ENCODE measurements at regions of chr7 and their contacts with region 1.

Region 1: DNA sequence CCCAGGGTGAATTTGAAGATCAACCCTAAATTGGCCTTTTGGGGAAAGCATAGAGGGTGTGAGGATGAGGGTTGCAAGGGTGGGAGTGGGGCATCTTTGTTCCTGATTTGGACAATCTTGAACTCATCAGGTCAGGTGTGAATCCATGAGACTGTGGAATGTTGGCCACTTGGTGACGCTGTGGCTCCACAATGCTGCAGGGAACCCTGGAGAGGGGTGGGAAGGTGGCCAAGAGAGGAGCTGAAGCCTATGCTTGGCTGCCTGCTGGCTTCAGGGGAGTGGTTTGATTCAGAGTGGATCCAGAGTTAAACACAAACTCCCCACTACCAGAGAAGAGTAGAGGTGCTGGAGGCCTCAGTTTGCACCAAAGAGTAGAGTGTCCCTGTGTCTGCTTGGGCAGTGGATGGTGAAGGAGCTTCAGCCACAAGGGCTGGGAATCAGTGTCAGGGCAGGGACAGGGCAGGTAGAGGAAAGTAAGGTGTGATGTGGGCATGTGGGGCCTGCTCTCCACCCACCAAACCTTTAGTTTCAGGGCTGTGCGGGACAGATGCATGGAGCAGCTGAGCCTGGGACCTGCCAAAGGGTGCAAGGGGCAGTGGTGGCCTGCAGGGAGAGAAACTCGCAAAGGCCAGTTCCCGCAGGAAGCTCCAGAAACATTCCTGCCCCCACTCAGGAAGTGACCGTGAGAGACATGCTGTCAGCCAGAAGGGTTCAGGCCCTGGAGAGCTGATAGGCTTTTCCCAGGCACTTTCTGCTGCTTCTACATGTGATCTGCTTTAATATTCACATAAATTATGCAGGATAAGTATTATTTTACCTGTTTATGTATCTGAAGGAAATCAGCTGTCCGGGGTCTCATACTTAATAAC is 81.0 kb upstream of the PRSS58 start:
- DNase-seq: peak in 1 of 2 donors; percentile 40
- ATAC-seq: peak; percentile 69 to 71
- H3K4me3 ChIP-seq: no peak overlapping the region
- H3K27ac ChIP-seq: no peak overlapping the region
- H3K4me1 ChIP-seq: peaks cover 4 to 12% of the 10 kb centered on the region in 2 donors
- H3K27me3 ChIP-seq: no peaks in the 10 kb centered on the region
- CTCF ChIP-seq: peak in 3 of 5 experiments; percentile 32 to 55 (median 38)
- POLR2A ChIP-seq: no peak

Region 2: DNA sequence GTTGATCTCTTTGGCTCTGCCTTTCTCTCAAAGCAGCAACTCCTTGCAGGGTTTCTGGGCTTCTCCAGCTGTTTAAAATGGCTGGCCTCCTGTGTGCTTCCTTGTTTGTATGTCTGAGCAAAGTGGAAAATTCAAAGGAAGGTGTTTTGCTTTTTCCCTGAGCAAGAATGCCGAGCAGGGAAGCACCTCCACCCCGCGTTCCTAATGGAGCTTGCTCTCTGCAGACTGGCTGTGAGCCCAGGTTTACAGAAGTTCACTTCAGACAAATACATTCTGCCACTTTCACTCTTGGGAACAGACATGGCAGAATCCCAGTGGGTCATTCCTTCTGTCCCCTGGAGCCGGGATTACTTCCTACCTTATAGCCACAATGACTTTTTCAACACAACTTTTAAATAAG is 969.4 kb before region 1 on chr7:
- in situ Hi-C with region 1: no loop called
- intact Hi-C with region 1: no loop called
- DNase-seq: peak in 1 of 2 donors; percentile 17
- ATAC-seq: peak; percentile 53 to 71
- H3K4me3 ChIP-seq: no peak overlapping the region
- H3K27ac ChIP-seq: peak overlapping the region in 2 of 4 donors; percentile 50 to 67
- H3K4me1 ChIP-seq: peaks cover 19 to 29% of the 10 kb centered on the region in 2 donors
- H3K27me3 ChIP-seq: no peaks in the 10 kb centered on the region
- CTCF ChIP-seq: no peak
- POLR2A ChIP-seq: no peak

Region 3: DNA sequence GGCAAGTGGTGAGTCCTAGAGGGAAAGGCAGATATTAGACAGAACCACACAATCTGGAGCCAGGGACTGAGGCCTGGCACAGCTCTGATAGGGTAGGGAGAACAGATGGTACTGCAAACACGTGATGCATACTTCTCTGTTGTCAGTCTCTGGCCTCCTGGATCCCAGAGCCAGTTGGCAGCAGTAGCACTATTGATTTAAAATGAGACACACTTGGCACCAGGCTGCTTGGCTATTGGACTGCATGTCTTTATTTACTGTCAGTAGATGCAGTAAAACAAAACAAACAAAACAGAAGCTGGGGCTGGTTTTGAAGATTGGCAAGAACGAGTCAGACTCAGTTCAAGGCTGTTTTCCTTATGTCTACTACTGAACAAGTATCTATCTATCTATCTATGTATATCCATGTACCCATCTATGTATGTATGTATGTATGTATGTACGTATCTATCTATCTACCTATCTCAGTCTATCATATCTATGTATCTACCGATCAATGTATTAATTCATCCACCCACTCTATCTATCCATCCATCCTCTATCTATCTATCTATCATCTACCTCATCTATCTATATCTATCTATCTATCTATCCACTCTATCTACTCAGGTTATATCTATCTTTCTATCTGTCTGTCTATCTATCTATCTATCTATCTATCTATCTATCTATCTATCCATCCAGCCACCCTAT is 250.7 kb before region 1 on chr7:
- in situ Hi-C with region 1: no loop called
- intact Hi-C with region 1: no loop called
- DNase-seq: no peak
- ATAC-seq: no peak
- H3K4me3 ChIP-seq: no peak overlapping the region
- H3K27ac ChIP-seq: no peak overlapping the region
- H3K4me1 ChIP-seq: no peaks in the 10 kb centered on the region
- H3K27me3 ChIP-seq: no peaks in the 10 kb centered on the region
- CTCF ChIP-seq: no peak
- POLR2A ChIP-seq: no peak

Region 4: DNA sequence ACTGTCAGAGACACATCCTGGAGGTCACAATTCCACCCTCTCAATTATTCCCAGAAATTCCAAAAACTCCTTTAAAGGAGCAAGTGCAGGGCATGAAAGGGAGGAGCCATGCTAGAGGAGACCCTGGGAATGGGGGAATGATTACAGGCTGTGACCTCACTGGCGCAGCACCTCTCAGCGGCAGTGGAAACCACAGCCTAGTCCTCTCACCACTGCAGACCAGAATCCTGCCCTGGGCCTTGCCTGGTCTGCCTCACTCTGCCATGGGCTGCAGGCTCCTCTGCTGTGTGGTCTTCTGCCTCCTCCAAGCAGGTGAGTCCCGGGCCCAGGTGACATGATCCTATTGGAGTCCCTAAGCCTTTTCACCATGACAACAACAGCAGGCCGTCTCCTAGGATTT is 30.5 kb before region 1 on chr7:
- in situ Hi-C with region 1: no loop called
- intact Hi-C with region 1: loop called (anchors 1 kb)
- DNase-seq: no peak
- ATAC-seq: no peak
- H3K4me3 ChIP-seq: no peak overlapping the region
- H3K27ac ChIP-seq: no peak overlapping the region
- H3K4me1 ChIP-seq: no peaks in the 10 kb centered on the region
- H3K27me3 ChIP-seq: no peaks in the 10 kb centered on the region
- CTCF ChIP-seq: no peak
- POLR2A ChIP-seq: no peak